Endothelial cell of umbilical vein (primary cell): ENCODE measurements at regions of chr9 and their contacts with region 1.

Region 1: DNA sequence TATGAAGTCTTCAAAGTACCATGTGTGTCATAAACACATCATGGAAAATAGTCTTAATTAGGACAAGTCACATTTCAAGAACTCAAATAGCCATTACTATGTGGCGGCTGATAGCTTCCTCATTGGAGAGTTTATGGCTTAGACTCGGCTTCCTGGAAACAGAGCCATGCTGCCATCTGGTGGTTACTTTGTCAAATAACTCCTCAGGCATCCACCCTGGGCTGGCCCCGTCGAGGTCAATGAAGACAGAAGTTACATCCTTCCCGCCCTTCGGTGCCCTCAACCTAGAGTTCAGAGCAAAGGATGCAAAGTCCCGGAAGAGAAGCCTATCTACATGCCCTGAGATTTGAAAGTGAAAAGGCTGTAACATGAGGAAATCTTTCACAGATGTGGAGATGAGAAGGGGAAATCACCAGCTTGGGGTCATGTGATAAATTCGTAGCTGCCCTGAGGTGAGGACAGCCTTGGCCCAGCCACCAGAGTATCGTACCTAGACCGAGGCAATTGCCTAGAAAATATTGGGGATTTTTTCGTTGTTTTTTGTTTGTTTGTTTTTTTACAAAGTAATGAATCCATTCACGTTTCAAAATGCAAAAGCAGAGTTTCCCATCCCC is 45.5 kb upstream of the ZNF169 start:
- DNase-seq: peak; percentile 72
- H3K4me3 ChIP-seq: no peak overlapping the region
- H3K27ac ChIP-seq: no peak overlapping the region
- H3K4me1 ChIP-seq: peaks cover 2% of the 10 kb centered on the region
- H3K27me3 ChIP-seq: no peaks in the 10 kb centered on the region
- CTCF ChIP-seq: peak; percentile 69
- POLR2A ChIP-seq: no peak

Region 2: GRCh38 chr9:93682232-93682968 is 531.2 kb before region 1 on chr9:
- CTCF ChIA-PET with region 1: interaction called, 20 read pairs
- POLR2A ChIA-PET with region 1: no interaction called
- dilution Hi-C with region 1: no loop called
- intact Hi-C with region 1: loop called (anchors 2 kb)
- DNase-seq: peak; percentile 55
- H3K4me3 ChIP-seq: no peak overlapping the region
- H3K27ac ChIP-seq: no peak overlapping the region
- H3K4me1 ChIP-seq: peaks cover 14% of the 10 kb centered on the region
- H3K27me3 ChIP-seq: no peaks in the 10 kb centered on the region
- CTCF ChIP-seq: peak; percentile 74 to 82
- POLR2A ChIP-seq: no peak

Region 3: GRCh38 chr9:94002316-94003140 is 211.1 kb before region 1 on chr9:
- CTCF ChIA-PET with region 1: interaction called, 22 read pairs
- POLR2A ChIA-PET with region 1: no interaction called
- dilution Hi-C with region 1: no loop called
- intact Hi-C with region 1: no loop called
- DNase-seq: peak; percentile 57
- H3K4me3 ChIP-seq: no peak overlapping the region
- H3K27ac ChIP-seq: no peak overlapping the region
- H3K4me1 ChIP-seq: no peaks in the 10 kb centered on the region
- H3K27me3 ChIP-seq: peaks cover 9 to 18% of the 10 kb centered on the region in 2 experiments
- CTCF ChIP-seq: peak; percentile 61 to 77
- POLR2A ChIP-seq: no peak

Region 4: DNA sequence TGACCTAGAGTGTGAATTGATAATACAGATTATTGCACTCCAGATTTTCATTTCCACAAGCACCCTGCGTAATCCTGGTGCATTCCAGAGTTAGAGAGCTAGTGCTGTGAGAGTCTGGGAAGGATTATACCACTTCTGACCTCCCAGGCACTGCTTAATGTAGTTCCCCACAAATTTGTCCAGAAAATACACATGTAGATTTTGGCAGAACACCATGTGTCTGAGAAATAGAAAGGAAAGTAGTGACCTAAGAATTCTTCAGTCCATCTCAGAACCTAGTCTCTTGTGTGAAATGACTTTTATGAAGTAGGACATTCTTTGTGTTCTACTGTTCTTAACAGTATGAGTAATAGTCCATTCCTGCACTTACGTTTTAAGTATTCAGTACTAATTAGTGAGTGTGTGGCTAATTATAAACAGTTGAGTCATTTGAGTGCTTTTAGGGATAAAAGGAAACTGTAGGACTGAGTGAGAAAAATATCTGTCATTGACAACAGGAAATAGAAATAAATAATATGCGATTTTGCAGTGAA is 157.1 kb before region 1 on chr9:
- CTCF ChIA-PET with region 1: interaction called, 26 read pairs
- POLR2A ChIA-PET with region 1: no interaction called
- dilution Hi-C with region 1: no loop called
- intact Hi-C with region 1: no loop called
- DNase-seq: peak; percentile 58
- H3K4me3 ChIP-seq: no peak overlapping the region
- H3K27ac ChIP-seq: peak overlapping the region; percentile 39
- H3K4me1 ChIP-seq: peaks cover 11% of the 10 kb centered on the region
- H3K27me3 ChIP-seq: no peaks in the 10 kb centered on the region
- CTCF ChIP-seq: no peak
- POLR2A ChIP-seq: no peak

Region 5: GRCh38 chr9:94084314-94084713 is 129.3 kb before region 1 on chr9 and contains the start of gene PTPDC1:
- CTCF ChIA-PET with region 1: interaction called, 15 read pairs
- POLR2A ChIA-PET with region 1: no interaction called
- dilution Hi-C with region 1: no loop called
- intact Hi-C with region 1: no loop called
- DNase-seq: peak; percentile 8
- H3K4me3 ChIP-seq: no peak within 1 kb of the TSS
- H3K27ac ChIP-seq: no peak within 1 kb of the TSS
- H3K4me1 ChIP-seq: peaks cover 9% of the 10 kb centered on the region
- H3K27me3 ChIP-seq: no peaks in the 10 kb centered on the region
- CTCF ChIP-seq: no peak
- POLR2A ChIP-seq: no peak
- total RNA-seq, gene PTPDC1: 9.1 TPM in 2 replicates

Region 6: DNA sequence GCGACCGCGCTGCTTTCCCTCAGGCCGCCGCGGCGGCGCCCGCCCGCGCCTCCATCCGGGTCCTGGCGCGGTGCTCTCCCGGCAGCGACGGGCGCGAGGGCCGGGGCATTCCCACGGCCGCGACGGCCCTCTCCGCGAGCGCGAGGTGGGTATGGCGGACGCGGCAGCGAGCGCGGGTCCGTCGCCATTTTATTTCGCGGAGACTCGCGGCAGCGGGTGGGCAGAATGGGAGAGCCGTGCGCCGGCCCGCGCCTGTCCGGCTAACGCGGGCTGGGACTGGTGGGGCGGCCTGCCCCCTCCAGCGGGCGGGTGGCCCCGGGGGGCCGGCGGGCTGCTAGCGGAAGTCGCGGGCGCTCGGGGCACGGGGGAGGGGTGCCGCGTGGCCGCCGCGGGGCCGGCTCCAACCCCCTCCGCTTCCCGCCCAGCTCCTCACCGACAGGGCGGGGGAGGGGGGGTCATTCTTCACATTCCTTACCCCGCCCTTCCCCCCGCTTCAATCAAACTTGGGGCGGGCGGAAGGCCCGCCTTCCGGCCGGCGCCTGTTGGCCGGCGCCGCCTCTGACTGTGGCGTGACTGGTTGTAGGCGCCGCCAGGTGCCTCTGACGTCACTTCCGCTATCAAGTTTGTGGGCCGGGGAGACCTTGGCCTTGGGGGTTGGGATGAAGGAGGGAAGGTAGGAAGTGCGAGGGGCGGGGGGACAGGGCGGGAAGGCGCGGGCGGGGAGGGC is 47.2 kb before region 1 on chr9:
- CTCF ChIA-PET with region 1: interaction called, 21 read pairs
- POLR2A ChIA-PET with region 1: interaction called, 6 read pairs
- dilution Hi-C with region 1: no loop called
- intact Hi-C with region 1: loop called (anchors 1 kb)
- DNase-seq: peak; percentile 98
- H3K4me3 ChIP-seq: peak overlapping the region; percentile 66 to 83 (median 70)
- H3K27ac ChIP-seq: peak overlapping the region; percentile 100
- H3K4me1 ChIP-seq: peaks cover 29% of the 10 kb centered on the region
- H3K27me3 ChIP-seq: no peaks in the 10 kb centered on the region
- CTCF ChIP-seq: no peak
- POLR2A ChIP-seq: peak; percentile 64

Region 7: DNA sequence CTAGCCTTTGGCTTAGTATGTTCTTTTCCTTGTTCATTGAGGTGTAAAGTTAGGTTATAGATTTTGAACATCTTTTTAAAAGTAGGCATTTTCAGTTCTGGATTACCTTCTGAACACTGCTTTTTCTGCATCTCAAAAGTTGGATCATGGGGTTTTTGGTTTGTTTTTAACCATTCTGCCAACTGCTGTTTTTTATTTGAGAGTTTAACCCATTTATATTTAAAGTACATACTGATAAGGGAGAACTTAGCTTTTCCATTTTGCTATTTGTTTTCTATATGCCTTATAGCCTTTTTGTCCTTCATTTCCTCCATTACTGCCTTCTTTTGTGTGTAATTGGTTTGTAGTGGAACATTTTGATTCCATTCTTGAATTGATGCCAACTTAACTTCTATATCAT is 15.0 kb after region 1 on chr9:
- CTCF ChIA-PET with region 1: interaction called, 16 read pairs
- POLR2A ChIA-PET with region 1: no interaction called
- dilution Hi-C with region 1: no loop called
- intact Hi-C with region 1: no loop called
- DNase-seq: no peak
- H3K4me3 ChIP-seq: no peak overlapping the region
- H3K27ac ChIP-seq: no peak overlapping the region
- H3K4me1 ChIP-seq: no peaks in the 10 kb centered on the region
- H3K27me3 ChIP-seq: peaks cover 6 to 9% of the 10 kb centered on the region in 2 experiments
- CTCF ChIP-seq: no peak
- POLR2A ChIP-seq: no peak

Region 8: DNA sequence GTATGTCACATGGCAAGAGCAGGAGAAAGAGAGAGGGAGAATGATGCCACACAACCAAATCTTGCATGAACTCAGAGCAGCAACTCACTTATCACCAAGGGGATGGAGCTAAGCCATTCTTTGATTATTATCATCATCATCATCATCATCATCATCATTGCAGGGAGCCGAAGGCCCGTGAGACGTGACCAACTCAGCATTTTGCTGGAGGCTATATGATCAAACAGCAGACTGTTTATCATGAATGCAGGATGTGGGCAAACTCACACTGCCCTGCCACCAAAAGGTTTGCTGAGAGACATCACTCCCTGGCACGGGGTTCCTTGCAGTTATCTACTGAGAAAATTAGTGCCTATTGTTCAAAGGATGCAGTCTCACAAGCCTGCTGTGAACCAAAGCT is 36.8 kb after region 1 on chr9:
- CTCF ChIA-PET with region 1: no interaction called
- POLR2A ChIA-PET with region 1: no interaction called
- dilution Hi-C with region 1: no loop called
- intact Hi-C with region 1: no loop called
- DNase-seq: no peak
- H3K4me3 ChIP-seq: no peak overlapping the region
- H3K27ac ChIP-seq: no peak overlapping the region
- H3K4me1 ChIP-seq: no peaks in the 10 kb centered on the region
- H3K27me3 ChIP-seq: peaks cover 2 to 3% of the 10 kb centered on the region in 2 experiments
- CTCF ChIP-seq: no peak
- POLR2A ChIP-seq: no peak

Region 9: DNA sequence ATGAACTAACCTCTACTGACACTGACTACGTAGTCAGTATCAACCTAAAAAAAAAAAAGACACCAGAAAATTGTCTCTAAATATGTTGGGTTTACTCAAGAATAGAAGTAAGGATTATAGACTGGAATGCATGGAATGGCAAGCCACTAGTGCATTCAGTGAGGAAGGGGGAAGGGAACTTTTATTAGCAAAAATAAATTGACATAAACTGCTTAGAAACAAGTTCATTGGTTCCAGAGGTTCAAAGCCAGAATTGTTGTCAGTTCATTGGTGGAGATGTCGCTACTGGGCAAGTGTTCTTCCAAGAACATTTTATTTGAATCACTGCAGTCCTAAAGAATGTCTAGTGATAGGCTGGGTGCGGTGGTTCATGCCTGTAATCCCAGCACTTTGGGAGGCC is 486.8 kb after region 1 on chr9:
- CTCF ChIA-PET with region 1: no interaction called
- POLR2A ChIA-PET with region 1: no interaction called
- dilution Hi-C with region 1: no loop called
- intact Hi-C with region 1: no loop called
- DNase-seq: no peak
- H3K4me3 ChIP-seq: no peak overlapping the region
- H3K27ac ChIP-seq: no peak overlapping the region
- H3K4me1 ChIP-seq: no peaks in the 10 kb centered on the region
- H3K27me3 ChIP-seq: peaks cover 7 to 12% of the 10 kb centered on the region in 2 experiments
- CTCF ChIP-seq: no peak
- POLR2A ChIP-seq: no peak

Region 10: DNA sequence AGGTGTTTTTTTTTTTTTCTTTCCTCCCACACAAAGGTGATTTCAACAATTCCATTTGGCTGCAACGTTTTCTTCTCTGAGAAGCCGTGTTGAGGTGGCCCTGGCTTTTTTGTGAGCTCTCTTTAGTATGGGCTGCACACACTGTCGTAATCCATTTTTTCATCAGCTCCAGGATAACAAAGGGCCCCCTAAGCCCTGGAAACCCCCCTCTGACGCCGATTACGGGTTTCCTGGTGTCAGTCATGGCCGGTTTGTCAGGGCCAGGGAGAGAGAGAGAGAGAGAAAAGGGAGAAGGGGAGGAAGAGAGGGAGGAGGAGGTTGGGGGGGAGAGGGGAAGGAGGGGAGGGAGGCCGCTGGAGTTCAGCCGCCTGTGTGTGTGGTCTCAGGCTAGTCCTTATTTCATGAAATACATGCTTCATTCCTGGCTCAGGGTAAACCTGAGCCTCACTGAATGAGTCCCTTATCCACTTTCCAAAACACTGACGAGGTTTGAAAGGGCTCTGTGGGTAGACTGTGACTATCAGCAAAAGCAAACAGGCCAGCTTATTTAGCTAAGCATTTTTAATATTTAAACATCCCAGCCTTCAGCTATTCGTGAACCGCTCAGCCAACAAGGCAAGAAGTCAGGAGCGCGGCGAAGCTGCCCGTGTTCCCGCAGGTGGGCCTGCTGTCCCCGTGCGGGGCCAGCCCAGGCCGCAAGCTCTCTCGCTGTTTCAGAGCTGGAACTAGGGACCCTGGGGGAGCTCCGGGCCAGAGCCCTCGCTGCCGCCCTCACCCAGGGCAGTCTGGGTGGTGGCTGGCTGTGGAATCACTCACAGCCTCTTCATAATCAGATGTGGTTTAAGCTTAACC is 1834.7 kb after region 1 on chr9:
- CTCF ChIA-PET with region 1: no interaction called
- POLR2A ChIA-PET with region 1: no interaction called
- dilution Hi-C with region 1: no loop called
- intact Hi-C with region 1: no loop called
- DNase-seq: peak; percentile 55
- H3K4me3 ChIP-seq: no peak overlapping the region
- H3K27ac ChIP-seq: no peak overlapping the region
- H3K4me1 ChIP-seq: no peaks in the 10 kb centered on the region
- H3K27me3 ChIP-seq: no peaks in the 10 kb centered on the region
- CTCF ChIP-seq: no peak
- POLR2A ChIP-seq: no peak